ENCODE measurements at regions of chr3 and their contacts with region 1.

Region 1: GRCh38 chr3:116663161-116664110 is 46.1 kb upstream of the TUSC7 start:
- DNase-seq: no peak
- ATAC-seq: no peak
- H3K4me3 ChIP-seq: no peak overlapping the region
- H3K27ac ChIP-seq: no peak overlapping the region
- H3K4me1 ChIP-seq: no peaks in the 10 kb centered on the region
- H3K27me3 ChIP-seq: peaks cover 0 to 9% (median 0%) of the 10 kb centered on the region in 7 donors
- CTCF ChIP-seq: no peak

Region 2: GRCh38 chr3:116607205-116607604 is 56.2 kb before region 1 on chr3:
- intact Hi-C with region 1: loop called in 1 of 10 experiments (anchors 10 kb)
- DNase-seq: no peak
- ATAC-seq: no peak
- H3K4me3 ChIP-seq: no peak overlapping the region
- H3K27ac ChIP-seq: no peak overlapping the region
- H3K4me1 ChIP-seq: no peaks in the 10 kb centered on the region
- H3K27me3 ChIP-seq: peaks cover 0 to 4% (median 0%) of the 10 kb centered on the region in 7 donors
- CTCF ChIP-seq: no peak

Region 3: DNA sequence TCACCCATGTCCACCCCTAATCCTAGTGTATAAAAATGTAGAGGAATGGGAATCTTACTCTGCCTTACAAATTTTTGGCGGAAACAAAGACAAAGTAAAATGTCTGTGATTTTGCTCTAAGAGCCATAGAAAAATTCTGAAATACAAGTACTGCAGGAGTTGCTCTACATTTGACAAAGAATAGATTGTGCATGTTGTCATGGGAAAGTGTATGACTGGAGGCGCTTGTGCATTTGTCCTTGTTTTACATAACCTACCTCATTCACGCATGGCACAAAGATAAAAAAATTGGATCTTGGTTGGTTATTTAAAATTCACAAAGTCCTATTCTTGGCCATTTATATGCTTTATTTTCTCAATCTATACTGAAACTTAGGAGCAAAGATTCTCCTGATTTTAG is 44.1 kb after region 1 on chr3:
- intact Hi-C with region 1: loop called in 1 of 10 experiments (anchors 2 kb)
- DNase-seq: no peak
- ATAC-seq: no peak
- H3K4me3 ChIP-seq: no peak overlapping the region
- H3K27ac ChIP-seq: no peak overlapping the region
- H3K4me1 ChIP-seq: no peaks in the 10 kb centered on the region
- H3K27me3 ChIP-seq: no peaks in the 10 kb centered on the region
- CTCF ChIP-seq: no peak